Activated CD4-positive, alpha-beta memory T cell treated with anti-CD3 and anti-CD28 coated beads for 36 hours (primary cell): ENCODE measurements at regions of chr1 and their contacts with region 1.

Region 1: GRCh38 chr1:89953072-89953626 is 41.8 kb upstream of the ZNF326 start:
- DNase-seq: peak; percentile 61
- H3K4me3 Mint-ChIP-seq: no peak overlapping the region
- H3K27ac Mint-ChIP-seq: no peak overlapping the region
- H3K4me1 Mint-ChIP-seq: peaks cover 14% of the 10 kb centered on the region
- H3K27me3 Mint-ChIP-seq: no peaks in the 10 kb centered on the region

Region 2: DNA sequence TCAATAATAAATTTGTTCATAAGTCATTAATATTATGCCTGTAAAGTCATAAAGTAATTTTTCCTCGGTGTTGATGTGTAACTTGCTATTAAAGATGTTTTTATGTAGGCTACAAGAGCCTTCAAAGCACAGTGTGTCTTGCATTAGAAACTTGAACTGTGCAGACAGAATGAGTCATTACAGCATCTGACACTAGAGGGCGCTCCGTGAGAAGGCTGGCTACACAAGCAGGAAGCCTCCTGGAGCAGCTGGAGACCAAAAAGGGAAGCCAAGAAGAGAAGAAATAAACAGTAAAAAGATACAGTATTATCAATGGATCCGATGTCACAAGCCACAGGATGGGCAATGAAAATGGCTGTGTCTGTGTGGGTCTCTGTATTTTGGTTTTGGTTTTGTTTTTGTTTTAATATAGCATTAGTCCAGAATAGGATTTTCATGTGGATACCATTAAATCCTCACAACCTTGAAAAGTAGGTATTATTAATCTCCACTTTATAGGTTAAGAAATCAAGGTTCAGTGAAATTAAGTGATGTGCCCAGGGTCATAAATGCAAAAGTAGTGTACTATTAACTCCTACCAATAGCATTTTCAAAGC is 148.4 kb before region 1 on chr1:
- CTCF ChIA-PET with region 1: interaction called, 4 read pairs
- POLR2A ChIA-PET with region 1: no interaction called
- intact Hi-C with region 1: loop called (anchors 1 kb)
- DNase-seq: peak; percentile 90
- H3K4me3 Mint-ChIP-seq: no peak overlapping the region
- H3K27ac Mint-ChIP-seq: no peak overlapping the region
- H3K4me1 Mint-ChIP-seq: no peaks in the 10 kb centered on the region
- H3K27me3 Mint-ChIP-seq: no peaks in the 10 kb centered on the region

Region 3: GRCh38 chr1:89820422-89821321 is 132.5 kb before region 1 on chr1 and contains the start of gene LRRC8D:
- CTCF ChIA-PET with region 1: no interaction called
- POLR2A ChIA-PET with region 1: interaction called, 3 read pairs
- intact Hi-C with region 1: loop called (anchors 5 kb)
- DNase-seq: peak; percentile 86
- H3K4me3 Mint-ChIP-seq: peak within 1 kb of the TSS; percentile 85
- H3K27ac Mint-ChIP-seq: peak within 1 kb of the TSS; percentile 55
- H3K4me1 Mint-ChIP-seq: peaks cover 26% of the 10 kb centered on the region
- H3K27me3 Mint-ChIP-seq: no peaks in the 10 kb centered on the region
- total RNA-seq, gene LRRC8D: 17.7 to 19.4 TPM

Region 4: GRCh38 chr1:89987170-89987819 is 34.1 kb after region 1 on chr1:
- CTCF ChIA-PET with region 1: interaction called, 3 read pairs
- POLR2A ChIA-PET with region 1: no interaction called
- intact Hi-C with region 1: loop called (anchors 2 kb)
- DNase-seq: peak; percentile 50
- H3K4me3 Mint-ChIP-seq: no peak overlapping the region
- H3K27ac Mint-ChIP-seq: no peak overlapping the region
- H3K4me1 Mint-ChIP-seq: no peaks in the 10 kb centered on the region
- H3K27me3 Mint-ChIP-seq: no peaks in the 10 kb centered on the region